ENCODE measurements at regions of chr6 and their contacts with region 1.

Region 1: DNA sequence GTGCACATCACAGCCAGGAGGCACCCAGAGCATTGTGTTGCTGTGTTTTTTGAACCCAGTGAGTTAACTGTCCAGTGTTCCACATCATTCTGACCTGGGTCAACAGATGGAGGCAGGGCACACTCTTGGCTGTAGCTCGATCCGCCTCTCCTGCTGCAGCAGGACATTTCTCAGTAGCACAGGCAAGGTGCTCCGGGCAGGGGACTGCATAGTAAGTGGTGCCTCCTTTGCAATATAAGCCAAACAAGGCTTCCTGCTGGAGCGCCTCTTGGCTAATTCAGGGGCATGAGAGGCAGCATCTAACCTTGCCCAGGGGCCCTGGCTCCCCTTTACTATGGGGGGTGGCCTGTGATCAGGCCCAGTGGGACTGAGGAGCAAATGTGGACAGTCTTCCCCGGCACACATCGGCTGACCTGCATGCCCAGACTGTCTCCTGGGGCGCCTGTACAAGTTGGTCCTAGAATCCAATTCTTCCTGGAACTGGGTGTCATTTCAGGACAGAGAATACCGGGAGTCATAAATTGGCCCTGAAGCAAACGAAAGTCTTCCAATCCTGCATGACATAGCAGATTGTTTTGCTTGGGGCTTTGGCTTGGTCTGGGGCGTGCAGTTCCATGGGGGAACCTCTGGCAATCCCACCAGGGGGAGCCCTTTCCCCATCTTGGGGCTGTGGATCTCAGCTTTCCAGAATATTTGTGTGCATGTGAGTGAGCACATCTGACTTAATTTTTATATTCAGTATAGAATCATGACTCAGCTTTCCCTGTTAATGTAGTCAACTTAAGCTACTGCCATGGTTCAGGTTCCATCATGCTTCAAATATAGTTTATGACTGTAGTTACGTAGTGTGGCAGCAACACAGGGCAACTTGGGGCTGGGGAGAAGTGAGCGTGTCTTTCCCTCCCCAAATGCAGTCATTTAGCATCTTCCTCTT is 56.0 kb upstream of the DDR1 start:
- DNase-seq: peak; percentile 85 to 95
- H3K4me3 ChIP-seq: no peak overlapping the region
- H3K27ac ChIP-seq: peak overlapping the region; percentile 82
- H3K4me1 ChIP-seq: peaks cover 34% of the 10 kb centered on the region
- H3K27me3 ChIP-seq: no peaks in the 10 kb centered on the region
- CTCF ChIP-seq: peak; percentile 93

Region 2: DNA sequence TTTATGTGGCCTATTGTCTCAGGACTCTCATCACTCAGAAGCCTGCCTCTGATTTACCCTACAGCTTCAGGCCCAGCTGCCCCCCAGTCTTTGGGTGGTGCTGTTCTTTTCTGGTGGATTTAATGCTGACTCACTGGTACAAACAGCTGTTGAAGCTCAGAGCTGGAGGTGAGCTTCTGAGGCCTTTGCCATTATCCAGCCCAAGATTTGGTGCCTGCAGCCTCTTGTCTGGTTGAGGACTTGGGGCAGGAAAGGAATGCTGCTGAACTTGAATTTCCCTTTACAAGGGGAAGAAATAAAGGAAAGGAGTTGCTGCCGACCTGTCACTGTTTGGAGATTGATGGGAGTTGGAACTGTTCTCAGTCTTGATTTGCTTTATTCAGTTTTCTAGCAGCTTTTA is 237.3 kb before region 1 on chr6:
- CTCF ChIA-PET with region 1: no interaction called
- POLR2A ChIA-PET with region 1: interaction called, 40 read pairs
- intact Hi-C with region 1: no loop called
- DNase-seq: peak; percentile 86 to 98
- H3K4me3 ChIP-seq: no peak overlapping the region
- H3K27ac ChIP-seq: peak overlapping the region; percentile 84
- H3K4me1 ChIP-seq: peaks cover 47% of the 10 kb centered on the region
- H3K27me3 ChIP-seq: no peaks in the 10 kb centered on the region
- CTCF ChIP-seq: no peak

Region 3: DNA sequence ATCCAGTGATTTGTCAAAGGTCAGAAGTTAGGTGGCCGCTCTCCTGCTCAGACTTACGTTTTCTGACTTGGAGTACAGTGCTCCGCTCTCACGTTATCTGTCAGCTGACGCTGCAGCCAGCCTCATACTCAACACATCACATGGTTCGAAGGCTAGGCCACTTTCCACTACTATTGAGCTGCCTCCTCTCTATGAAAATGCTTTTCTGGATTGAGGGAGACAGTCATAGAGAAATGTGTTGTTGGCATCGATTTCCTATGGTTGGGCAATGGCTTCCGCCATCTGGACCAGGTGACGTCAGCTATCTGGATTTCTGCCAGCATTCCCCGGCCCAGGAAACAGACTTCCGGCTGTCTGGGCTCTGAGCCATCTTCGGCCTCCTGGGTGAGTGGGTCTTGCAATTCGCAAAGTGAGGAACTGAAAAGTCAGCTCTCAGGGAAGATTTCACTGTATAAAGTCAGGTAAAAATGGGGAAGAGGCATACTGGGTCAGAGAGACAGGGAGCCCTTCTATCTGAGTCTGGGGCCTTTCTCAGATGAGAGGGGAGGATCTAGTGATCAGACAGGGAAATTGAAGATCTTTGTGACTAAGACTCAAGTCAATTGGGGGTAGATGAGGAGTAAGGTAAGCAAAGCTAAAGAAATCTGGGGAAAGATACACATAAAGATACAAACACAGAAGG is 46.4 kb before region 1 on chr6:
- CTCF ChIA-PET with region 1: no interaction called
- POLR2A ChIA-PET with region 1: no interaction called
- intact Hi-C with region 1: loop called (anchors 5 kb)
- DNase-seq: peak; percentile 91 to 97
- H3K4me3 ChIP-seq: peak overlapping the region; percentile 17; the same call in 1 of the 2 replicates
- H3K27ac ChIP-seq: peak overlapping the region; percentile 93
- H3K4me1 ChIP-seq: peaks cover 51% of the 10 kb centered on the region
- H3K27me3 ChIP-seq: no peaks in the 10 kb centered on the region
- CTCF ChIP-seq: no peak

Region 4: GRCh38 chr6:30883685-30884520 is 55.6 kb after region 1 on chr6 and contains the start of gene DDR1:
- CTCF ChIA-PET with region 1: interaction called, 8 read pairs
- POLR2A ChIA-PET with region 1: interaction called, 9 read pairs
- intact Hi-C with region 1: loop called (anchors 1 kb)
- DNase-seq: peak; percentile 81 to 85
- H3K4me3 ChIP-seq: peak within 1 kb of the TSS; percentile 98
- H3K27ac ChIP-seq: peak within 1 kb of the TSS; percentile 94
- H3K4me1 ChIP-seq: peaks cover 44% of the 10 kb centered on the region
- H3K27me3 ChIP-seq: no peaks in the 10 kb centered on the region
- CTCF ChIP-seq: no peak
- total RNA-seq, gene DDR1: 267 and 269 TPM in 2 replicates

Region 5: GRCh38 chr6:31068669-31069340 is 240.5 kb after region 1 on chr6:
- CTCF ChIA-PET with region 1: interaction called, 3 read pairs
- POLR2A ChIA-PET with region 1: no interaction called
- intact Hi-C with region 1: loop called (anchors 1 kb)
- DNase-seq: peak; percentile 61 to 80
- H3K4me3 ChIP-seq: no peak overlapping the region
- H3K27ac ChIP-seq: no peak overlapping the region
- H3K4me1 ChIP-seq: peaks cover 3% of the 10 kb centered on the region; the same call in 1 of the 2 replicates
- H3K27me3 ChIP-seq: no peaks in the 10 kb centered on the region
- CTCF ChIP-seq: peak; percentile 94

Region 6: DNA sequence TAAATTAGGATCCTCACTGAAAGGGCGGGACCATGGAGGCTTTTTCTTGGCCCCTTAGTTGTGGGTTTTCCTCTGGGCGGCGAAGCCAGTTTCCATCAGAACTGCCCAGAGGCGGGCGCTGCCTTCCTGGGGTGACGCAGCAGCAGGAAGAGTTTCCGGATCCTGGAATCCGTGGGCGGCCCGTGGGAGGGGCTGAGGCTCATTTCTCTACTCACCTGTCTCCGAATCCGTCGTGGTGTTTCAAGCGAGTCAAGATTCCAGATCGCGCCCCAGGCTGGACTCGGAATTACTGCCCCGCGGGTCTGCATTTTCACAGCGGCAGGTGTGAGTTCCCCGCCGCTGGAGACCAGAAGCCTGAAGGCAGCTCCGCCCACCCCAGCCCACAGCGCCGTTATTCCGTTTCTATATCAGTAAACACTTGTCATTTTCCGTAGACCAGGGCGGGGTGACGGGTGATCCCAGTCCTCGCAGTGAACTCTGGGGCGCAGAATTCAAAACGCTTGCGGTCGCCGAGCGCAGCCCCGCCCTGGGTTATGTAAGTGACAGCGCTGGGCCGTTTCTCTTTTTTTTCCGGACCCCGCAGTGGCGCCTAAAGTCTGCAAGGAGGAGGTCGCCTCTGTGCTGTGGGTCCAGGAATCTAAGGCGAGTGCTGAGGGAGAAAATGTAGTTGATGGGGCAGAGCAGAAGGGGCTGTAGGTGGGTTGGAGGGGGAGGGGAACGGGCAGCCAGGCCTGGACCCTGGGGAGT is 369.4 kb after region 1 on chr6:
- CTCF ChIA-PET with region 1: interaction called, 3 read pairs
- POLR2A ChIA-PET with region 1: no interaction called
- intact Hi-C with region 1: loop called (anchors 5 kb)
- DNase-seq: peak; percentile 82 to 88
- H3K4me3 ChIP-seq: peak overlapping the region; percentile 54
- H3K27ac ChIP-seq: peak overlapping the region; percentile 79
- H3K4me1 ChIP-seq: peaks cover 19% of the 10 kb centered on the region
- H3K27me3 ChIP-seq: no peaks in the 10 kb centered on the region
- CTCF ChIP-seq: no peak

Region 7: GRCh38 chr6:31345026-31345730 is 516.9 kb after region 1 on chr6:
- CTCF ChIA-PET with region 1: no interaction called
- POLR2A ChIA-PET with region 1: no interaction called
- intact Hi-C with region 1: no loop called
- DNase-seq: no peak
- H3K4me3 ChIP-seq: no peak overlapping the region
- H3K27ac ChIP-seq: no peak overlapping the region
- H3K4me1 ChIP-seq: no peaks in the 10 kb centered on the region
- H3K27me3 ChIP-seq: peaks cover 9% of the 10 kb centered on the region
- CTCF ChIP-seq: no peak

Measured in PC-9 (cell line).